HepG2 (cell line): ENCODE measurements at regions of chr1 and their contacts with region 1.

Region 1: GRCh38 chr1:196148367-196148970 is 459.8 kb downstream of the KCNT2 start:
- DNase-seq: peak; percentile 6
- ATAC-seq: no peak
- H3K4me3 ChIP-seq: no peak overlapping the region
- H3K27ac ChIP-seq: no peak overlapping the region
- H3K4me1 ChIP-seq: no peaks in the 10 kb centered on the region
- H3K27me3 ChIP-seq: no peaks in the 10 kb centered on the region
- CTCF ChIP-seq: peak; percentile 34
- EP300 ChIP-seq: no peak
- POLR2A ChIP-seq: no peak
- RAD21 ChIP-seq: no peak

Region 2: DNA sequence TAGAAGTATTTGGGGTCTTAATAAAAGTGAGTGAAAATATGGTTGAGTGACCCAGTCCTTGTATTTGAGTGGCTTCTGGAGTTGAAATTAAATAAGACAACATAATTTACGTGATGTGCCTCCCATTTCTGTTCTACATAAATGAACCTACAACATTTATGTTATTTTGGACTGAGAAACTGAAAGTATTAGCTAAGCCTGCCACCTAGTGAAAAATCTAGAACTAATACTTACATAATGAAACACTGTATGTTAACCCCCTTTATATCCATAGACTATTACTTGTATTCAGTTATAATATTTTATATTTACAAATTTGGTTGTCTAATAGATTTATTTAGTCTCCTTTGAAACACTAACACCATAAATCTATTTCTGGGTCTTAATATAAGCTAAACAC is 160.9 kb after region 1 on chr1:
- CTCF ChIA-PET with region 1: no interaction called
- POLR2A ChIA-PET with region 1: no interaction called
- in situ Hi-C with region 1: loop called (anchors 25 kb)
- intact Hi-C with region 1: loop called (anchors 1 kb)
- DNase-seq: peak; percentile 3
- ATAC-seq: no peak
- H3K4me3 ChIP-seq: no peak overlapping the region
- H3K27ac ChIP-seq: no peak overlapping the region
- H3K4me1 ChIP-seq: no peaks in the 10 kb centered on the region
- H3K27me3 ChIP-seq: no peaks in the 10 kb centered on the region
- CTCF ChIP-seq: peak; percentile 31; the same call in 1 of the 2 replicates
- EP300 ChIP-seq: no peak
- POLR2A ChIP-seq: no peak
- RAD21 ChIP-seq: no peak

Region 3: GRCh38 chr1:196317535-196318522 is 169.4 kb after region 1 on chr1:
- CTCF ChIA-PET with region 1: no interaction called
- POLR2A ChIA-PET with region 1: no interaction called
- in situ Hi-C with region 1: loop called (anchors 25 kb)
- intact Hi-C with region 1: no loop called
- DNase-seq: peak; percentile 21
- ATAC-seq: peak; percentile 63
- H3K4me3 ChIP-seq: no peak overlapping the region
- H3K27ac ChIP-seq: no peak overlapping the region
- H3K4me1 ChIP-seq: no peaks in the 10 kb centered on the region
- H3K27me3 ChIP-seq: no peaks in the 10 kb centered on the region
- CTCF ChIP-seq: peak; percentile 68
- EP300 ChIP-seq: no peak
- POLR2A ChIP-seq: no peak
- RAD21 ChIP-seq: no peak

Region 4: DNA sequence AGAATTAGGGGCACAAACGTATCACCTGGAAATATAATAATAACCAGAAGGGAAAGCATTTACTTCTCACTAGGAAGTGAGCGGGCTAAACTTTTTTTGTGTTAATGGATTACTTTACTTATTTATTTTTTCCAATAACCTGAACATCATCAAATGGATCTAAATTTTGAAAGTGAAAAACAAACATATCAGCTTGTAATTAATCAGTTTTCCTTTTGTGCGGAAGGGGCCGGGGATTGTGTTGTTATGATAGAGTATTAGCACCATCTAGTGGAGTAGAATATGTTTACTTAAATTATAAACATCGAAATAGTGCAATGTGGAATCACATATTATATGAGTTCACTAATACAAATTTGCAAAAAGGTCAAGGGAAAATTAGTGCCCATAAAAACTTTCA is 512.4 kb after region 1 on chr1:
- CTCF ChIA-PET with region 1: interaction called, 11 read pairs
- POLR2A ChIA-PET with region 1: no interaction called
- in situ Hi-C with region 1: loop called (anchors 10 kb)
- intact Hi-C with region 1: loop called (anchors 1 kb)
- DNase-seq: no peak
- ATAC-seq: peak; percentile 56; the same call in 2 of the 3 replicates
- H3K4me3 ChIP-seq: no peak overlapping the region
- H3K27ac ChIP-seq: no peak overlapping the region
- H3K4me1 ChIP-seq: no peaks in the 10 kb centered on the region
- H3K27me3 ChIP-seq: no peaks in the 10 kb centered on the region
- CTCF ChIP-seq: peak; percentile 64
- EP300 ChIP-seq: no peak
- POLR2A ChIP-seq: no peak
- RAD21 ChIP-seq: peak; percentile 43; the same call in 1 of the 2 replicates